ENCODE measurements at regions of chr18 and their contacts with region 1.

Region 1: GRCh38 chr18:28743115-28743514 is 566.2 kb upstream of the CDH2 start:
- DNase-seq: no peak
- ATAC-seq: no peak
- H3K4me3 Mint-ChIP-seq: no peak overlapping the region
- H3K27ac Mint-ChIP-seq: no peak overlapping the region
- H3K4me1 Mint-ChIP-seq: no peaks in the 10 kb centered on the region
- H3K27me3 Mint-ChIP-seq: no peaks in the 10 kb centered on the region
- CTCF ChIP-seq: no peak

Region 2: DNA sequence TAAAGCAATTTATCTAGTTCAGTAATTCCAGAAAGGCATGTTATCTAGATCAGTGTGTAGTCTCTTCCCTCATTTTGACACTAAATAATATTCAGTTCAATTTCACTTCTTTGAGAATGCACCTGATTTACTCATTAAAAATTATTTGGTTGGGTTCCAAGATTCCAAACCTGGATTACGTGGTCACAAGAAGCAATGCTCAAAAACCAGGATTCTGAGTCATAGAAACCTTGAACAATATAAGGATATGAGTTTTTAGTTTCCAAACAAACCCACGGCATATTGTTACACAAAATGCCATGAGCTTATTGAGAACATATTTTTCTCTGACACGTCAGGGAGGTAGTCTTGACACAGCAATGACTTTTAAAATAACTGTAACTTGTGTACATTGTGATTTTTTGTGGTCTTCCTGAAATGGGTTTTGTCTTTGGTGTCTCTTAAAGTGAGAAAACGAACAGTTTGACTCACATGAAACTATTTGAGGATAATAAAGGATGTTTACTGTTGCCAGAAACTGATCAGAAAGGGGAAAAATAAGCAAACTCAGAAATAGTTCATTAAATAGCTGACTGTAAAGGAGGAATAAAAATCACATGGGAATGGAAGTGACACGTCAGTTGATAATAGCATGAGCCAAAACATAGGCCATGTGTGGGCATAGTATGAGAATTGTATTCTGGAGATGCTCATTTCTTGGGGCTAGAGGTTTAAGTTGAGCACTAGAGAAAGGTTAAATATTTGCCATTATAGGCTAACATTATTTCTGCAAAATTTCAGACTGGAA is 51.5 kb after region 1 on chr18:
- CTCF ChIA-PET with region 1: no interaction called
- POLR2A ChIA-PET with region 1: no interaction called
- intact Hi-C with region 1: loop called (anchors 5 kb)
- DNase-seq: no peak
- ATAC-seq: no peak
- H3K4me3 Mint-ChIP-seq: no peak overlapping the region
- H3K27ac Mint-ChIP-seq: no peak overlapping the region
- H3K4me1 Mint-ChIP-seq: no peaks in the 10 kb centered on the region
- H3K27me3 Mint-ChIP-seq: no peaks in the 10 kb centered on the region
- CTCF ChIP-seq: no peak